IMR-90 (cell line): ENCODE measurements at regions of chr15 and their contacts with region 1.

Region 1: DNA sequence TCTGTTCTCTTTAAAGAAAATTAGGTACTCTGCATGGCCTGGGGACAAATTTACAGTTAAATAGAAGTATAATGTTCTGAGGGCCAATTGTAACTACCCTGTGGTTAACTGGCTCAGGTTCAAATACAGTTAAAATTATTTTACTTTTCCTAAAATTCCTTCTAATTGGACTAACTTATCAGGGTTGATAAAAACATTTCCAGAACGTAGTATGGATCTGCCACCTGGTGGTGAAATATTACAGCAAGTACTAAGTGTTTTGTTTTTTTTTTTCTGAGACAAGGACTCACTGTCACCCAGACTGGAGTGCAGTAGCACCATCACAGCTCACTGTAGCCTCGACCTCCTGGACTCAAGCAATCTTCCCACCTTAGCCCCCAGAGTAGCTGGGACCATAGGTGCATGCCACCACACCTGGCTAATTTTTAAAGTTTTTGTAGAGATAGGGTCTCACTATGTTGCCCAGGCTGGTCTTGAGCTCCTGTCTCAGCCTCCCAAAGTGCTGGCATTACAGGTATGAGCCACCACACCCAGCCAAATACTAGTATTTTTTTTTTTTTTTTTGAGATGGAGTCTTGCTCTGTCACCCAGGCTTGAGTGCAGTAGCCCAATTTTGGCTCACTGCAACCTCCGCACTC is 29.2 kb downstream of the NEO1 start:
- DNase-seq: peak; percentile 71
- ATAC-seq: no peak
- H3K4me3 ChIP-seq: no peak overlapping the region
- H3K27ac ChIP-seq: no peak overlapping the region
- H3K4me1 ChIP-seq: peaks cover 3% of the 10 kb centered on the region
- H3K27me3 ChIP-seq: no peaks in the 10 kb centered on the region
- CTCF ChIP-seq: peak; percentile 82
- POLR2A ChIP-seq: 0 out of 2 replicates have a peak, but pooled peaks have one; percentile 37
- RAD21 ChIP-seq: peak; percentile 89

Region 2: GRCh38 chr15:72599855-72600464 is 481.5 kb before region 1 on chr15:
- CTCF ChIA-PET with region 1: no interaction called
- POLR2A ChIA-PET with region 1: no interaction called
- dilution Hi-C with region 1: no loop called
- in situ Hi-C with region 1: no loop called
- intact Hi-C with region 1: loop called (anchors 2 kb)
- DNase-seq: peak; percentile 68
- ATAC-seq: peak; percentile 90
- H3K4me3 ChIP-seq: no peak overlapping the region
- H3K27ac ChIP-seq: no peak overlapping the region
- H3K4me1 ChIP-seq: no peaks in the 10 kb centered on the region
- H3K27me3 ChIP-seq: 0 out of 2 replicates have a peak, but pooled peaks cover 2% of the 10 kb centered on the region
- CTCF ChIP-seq: peak; percentile 68
- POLR2A ChIP-seq: no peak
- RAD21 ChIP-seq: peak; percentile 67

Region 3: GRCh38 chr15:72783563-72784237 is 297.7 kb before region 1 on chr15 and contains the start of gene ADPGK:
- CTCF ChIA-PET with region 1: no interaction called
- POLR2A ChIA-PET with region 1: no interaction called
- dilution Hi-C with region 1: no loop called
- in situ Hi-C with region 1: loop called (anchors 5 kb)
- intact Hi-C with region 1: loop called (anchors 2 kb)
- DNase-seq: peak; percentile 88
- ATAC-seq: peak; percentile 92
- H3K4me3 ChIP-seq: peak within 1 kb of the TSS; percentile 79
- H3K27ac ChIP-seq: peak within 1 kb of the TSS; percentile 90
- H3K4me1 ChIP-seq: peaks cover 16% of the 10 kb centered on the region
- H3K27me3 ChIP-seq: no peaks in the 10 kb centered on the region
- CTCF ChIP-seq: no peak
- POLR2A ChIP-seq: peak; percentile 86
- RAD21 ChIP-seq: no peak
- total RNA-seq, gene ADPGK: 48.0 and 53.2 TPM in 2 replicates

Region 4: DNA sequence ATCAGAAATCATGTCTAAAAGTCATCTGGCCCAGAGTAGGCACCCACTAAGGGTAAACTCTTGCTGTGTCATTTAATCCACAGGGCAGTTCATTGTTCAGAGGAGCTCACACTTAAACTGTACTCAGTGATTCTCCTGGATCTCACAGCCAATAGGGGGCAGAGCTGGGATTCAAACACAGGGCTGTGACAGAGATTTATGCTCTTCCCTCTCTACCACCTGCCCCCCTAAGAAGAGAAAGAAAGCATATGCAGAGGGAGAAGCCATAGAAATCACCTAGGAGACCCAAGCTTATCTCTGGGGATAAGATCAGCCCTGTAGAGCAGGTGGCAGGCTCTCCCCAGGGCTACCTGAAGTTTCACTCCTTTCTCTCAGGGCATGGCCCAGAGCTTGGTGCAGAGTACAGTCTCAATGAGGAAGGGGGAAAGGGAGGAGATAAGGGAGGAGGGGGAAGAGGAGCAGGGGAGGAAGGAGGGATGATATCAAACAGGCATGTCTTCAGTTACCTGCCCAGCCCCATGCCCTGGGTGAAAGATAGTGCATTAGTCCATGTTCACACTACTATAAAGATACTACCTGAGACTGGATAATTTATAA is 246.0 kb before region 1 on chr15:
- CTCF ChIA-PET with region 1: interaction called, 3 read pairs
- POLR2A ChIA-PET with region 1: interaction called, 15 read pairs
- dilution Hi-C with region 1: no loop called
- in situ Hi-C with region 1: no loop called
- intact Hi-C with region 1: no loop called
- DNase-seq: no peak
- ATAC-seq: no peak
- H3K4me3 ChIP-seq: no peak overlapping the region
- H3K27ac ChIP-seq: no peak overlapping the region
- H3K4me1 ChIP-seq: no peaks in the 10 kb centered on the region
- H3K27me3 ChIP-seq: peaks cover 31% of the 10 kb centered on the region
- CTCF ChIP-seq: peak; percentile 29; the same call in 1 of the 2 replicates
- POLR2A ChIP-seq: no peak
- RAD21 ChIP-seq: peak; percentile 27; the same call in 1 of the 2 replicates

Region 5: DNA sequence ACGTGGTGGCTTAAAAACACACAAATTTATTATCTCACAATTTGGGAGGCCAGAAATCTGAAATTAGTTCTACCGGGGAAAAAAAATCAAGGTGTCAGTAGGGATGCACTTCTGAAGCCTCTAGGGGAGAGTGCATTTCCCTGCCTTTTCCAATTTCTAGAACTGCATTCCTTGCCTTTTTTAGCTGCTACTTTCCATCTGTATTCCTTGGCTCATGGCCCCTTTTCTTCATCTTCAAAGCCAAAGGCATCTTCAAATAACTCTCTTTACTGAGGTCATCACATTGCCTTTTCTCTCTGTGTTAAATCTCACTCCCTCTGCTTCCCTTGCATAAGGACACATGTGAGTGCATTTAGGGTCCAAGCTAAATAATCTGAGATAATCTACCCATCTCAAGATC is 98.7 kb before region 1 on chr15:
- CTCF ChIA-PET with region 1: no interaction called
- POLR2A ChIA-PET with region 1: no interaction called
- dilution Hi-C with region 1: no loop called
- in situ Hi-C with region 1: no loop called
- intact Hi-C with region 1: no loop called
- DNase-seq: peak; percentile 41
- ATAC-seq: peak; percentile 51; the same call in 1 of the 2 replicates
- H3K4me3 ChIP-seq: no peak overlapping the region
- H3K27ac ChIP-seq: no peak overlapping the region
- H3K4me1 ChIP-seq: peaks cover 3% of the 10 kb centered on the region; the same call in 1 of the 2 replicates
- H3K27me3 ChIP-seq: peaks cover 4% of the 10 kb centered on the region
- CTCF ChIP-seq: no peak
- POLR2A ChIP-seq: no peak
- RAD21 ChIP-seq: no peak

Region 6: DNA sequence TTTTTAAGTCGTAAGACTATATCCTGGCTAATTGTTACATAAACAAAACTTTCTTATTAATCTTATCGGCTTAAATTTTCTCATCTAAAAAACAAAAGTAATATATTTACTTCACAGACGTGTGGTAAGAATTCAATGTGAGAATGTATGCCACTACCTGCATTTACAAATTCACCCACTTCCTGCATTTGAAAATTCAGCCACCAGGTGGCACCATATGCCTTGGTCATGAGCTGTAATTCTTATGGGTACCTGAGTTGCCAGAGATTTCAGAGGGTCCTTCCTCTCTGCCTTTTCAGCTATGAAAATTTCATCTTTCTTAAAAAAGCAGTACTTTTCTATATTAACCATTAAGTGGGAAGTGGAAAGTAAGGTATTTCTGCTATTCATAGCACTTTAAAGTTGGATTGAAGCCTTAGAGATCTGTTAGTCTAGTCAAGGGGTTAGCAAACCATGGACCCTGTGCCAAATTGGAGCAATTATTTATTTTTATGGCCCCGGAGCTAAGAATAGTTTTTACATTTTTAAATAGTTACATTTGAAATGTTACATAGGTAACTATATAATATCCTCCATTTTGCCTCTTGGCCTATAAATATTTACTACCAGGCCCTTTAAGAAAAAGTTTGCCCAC is 159.5 kb after region 1 on chr15:
- CTCF ChIA-PET with region 1: interaction called, 4 read pairs
- POLR2A ChIA-PET with region 1: no interaction called
- dilution Hi-C with region 1: no loop called
- in situ Hi-C with region 1: no loop called
- intact Hi-C with region 1: loop called (anchors 10 kb)
- DNase-seq: peak; percentile 67
- ATAC-seq: peak; percentile 61
- H3K4me3 ChIP-seq: no peak overlapping the region
- H3K27ac ChIP-seq: no peak overlapping the region
- H3K4me1 ChIP-seq: peaks cover 3% of the 10 kb centered on the region
- H3K27me3 ChIP-seq: no peaks in the 10 kb centered on the region
- CTCF ChIP-seq: peak; percentile 82
- POLR2A ChIP-seq: no peak
- RAD21 ChIP-seq: peak; percentile 76

Region 7: GRCh38 chr15:73660455-73660854 is 579.0 kb after region 1 on chr15:
- CTCF ChIA-PET with region 1: no interaction called
- POLR2A ChIA-PET with region 1: no interaction called
- dilution Hi-C with region 1: no loop called
- in situ Hi-C with region 1: no loop called
- intact Hi-C with region 1: no loop called
- DNase-seq: no peak
- ATAC-seq: no peak
- H3K4me3 ChIP-seq: no peak overlapping the region
- H3K27ac ChIP-seq: no peak overlapping the region
- H3K4me1 ChIP-seq: no peaks in the 10 kb centered on the region
- H3K27me3 ChIP-seq: peaks cover 22% of the 10 kb centered on the region
- CTCF ChIP-seq: no peak
- POLR2A ChIP-seq: no peak
- RAD21 ChIP-seq: no peak